MCF 10A (cell line): ENCODE measurements at regions of chr3 and their contacts with region 1.

Region 1: DNA sequence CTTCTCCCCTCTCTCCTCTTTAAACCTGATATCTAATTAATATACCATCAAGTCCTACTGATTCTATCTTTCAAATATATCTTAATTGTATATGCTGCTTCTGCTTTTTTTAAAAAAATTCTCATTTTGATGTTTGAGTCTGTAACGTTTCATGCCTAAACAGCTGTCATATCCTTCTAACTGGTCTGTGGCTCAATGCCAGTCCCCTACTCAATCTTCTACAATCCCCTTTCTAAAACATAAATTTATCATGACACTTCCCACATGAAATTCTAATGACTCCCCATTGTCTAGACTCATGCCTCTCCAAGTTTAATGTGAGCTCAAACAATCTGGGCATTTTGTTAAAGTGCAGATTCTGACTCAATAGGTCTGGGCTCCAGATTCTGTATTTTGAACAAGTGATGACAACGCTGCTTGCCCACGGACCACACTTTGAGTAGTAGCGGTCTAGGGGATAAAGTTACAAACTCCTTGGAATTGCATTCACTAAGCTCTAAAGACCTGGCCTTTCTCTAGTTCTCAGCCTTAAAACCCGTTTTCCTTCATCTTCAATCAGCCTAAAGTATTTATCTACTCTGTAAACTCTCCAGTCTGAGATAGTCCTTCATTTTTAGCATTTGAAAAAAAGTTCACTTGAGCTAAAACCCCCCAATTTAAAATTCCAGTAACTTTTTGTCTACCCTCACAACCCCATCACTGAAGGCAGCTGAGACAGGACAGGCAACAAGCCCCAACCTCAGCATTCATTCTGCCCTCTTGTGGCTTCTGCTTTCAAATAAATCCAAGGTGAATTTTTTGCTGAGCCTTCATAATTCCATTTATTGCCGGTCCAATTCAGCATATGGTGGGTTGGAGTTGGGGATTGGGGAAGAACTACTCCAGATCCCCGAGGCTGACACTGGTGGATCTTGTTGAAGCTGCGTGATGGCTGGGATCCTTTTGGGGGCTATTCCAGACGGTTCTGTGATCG is 88.1 kb upstream of the THRB start:
- DNase-seq: peak; percentile 35
- H3K4me3 Mint-ChIP-seq: no peak overlapping the region
- H3K27ac Mint-ChIP-seq: no peak overlapping the region
- H3K4me1 Mint-ChIP-seq: no peaks in the 10 kb centered on the region
- H3K27me3 Mint-ChIP-seq: no peaks in the 10 kb centered on the region
- CTCF ChIP-seq: peak; percentile 21

Region 2: DNA sequence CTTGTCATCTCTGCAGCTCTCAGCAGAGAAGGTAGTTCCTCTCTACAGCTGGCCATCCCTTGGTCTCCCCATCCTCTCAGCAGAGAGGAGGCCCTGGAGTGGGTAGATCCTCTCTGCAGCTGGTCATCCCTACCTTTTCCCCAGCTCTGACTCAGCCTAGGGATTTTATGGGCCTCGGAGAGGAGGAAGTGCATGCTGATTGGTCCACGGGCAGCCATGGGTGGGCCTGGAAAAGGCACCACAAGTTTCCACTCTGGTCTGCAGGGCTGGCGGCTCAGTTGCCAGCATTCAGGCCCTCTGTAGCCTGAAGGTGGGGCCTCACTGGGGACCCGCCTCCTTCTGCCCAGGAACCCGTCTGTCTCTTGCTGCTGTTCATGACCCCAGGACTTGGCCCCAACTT is 600.8 kb before region 1 on chr3:
- CTCF ChIA-PET with region 1: no interaction called
- POLR2A ChIA-PET with region 1: no interaction called
- intact Hi-C with region 1: no loop called
- DNase-seq: no peak
- H3K4me3 Mint-ChIP-seq: no peak overlapping the region
- H3K27ac Mint-ChIP-seq: no peak overlapping the region
- H3K4me1 Mint-ChIP-seq: no peaks in the 10 kb centered on the region
- H3K27me3 Mint-ChIP-seq: no peaks in the 10 kb centered on the region
- CTCF ChIP-seq: no peak

Region 3: DNA sequence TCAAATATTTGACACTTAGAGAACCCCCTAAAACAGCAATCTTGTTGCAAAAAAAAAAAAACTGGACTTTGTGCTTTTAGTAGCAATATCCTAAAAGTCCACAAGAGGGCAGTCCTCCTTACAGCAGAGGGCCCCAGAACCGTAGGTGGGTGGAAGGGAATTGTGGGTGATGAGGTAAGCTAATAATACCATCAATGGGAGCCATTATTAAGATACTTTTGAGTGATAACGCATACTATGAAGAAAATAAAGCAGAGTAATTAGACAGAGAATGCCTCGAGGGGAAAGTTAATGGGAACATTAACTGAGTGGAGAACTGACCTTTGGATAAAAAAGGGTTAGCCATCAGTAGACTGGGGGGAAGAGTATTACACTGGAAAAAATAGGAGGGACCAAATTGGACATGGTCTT is 318.0 kb before region 1 on chr3:
- CTCF ChIA-PET with region 1: interaction called, 10 read pairs
- POLR2A ChIA-PET with region 1: no interaction called
- intact Hi-C with region 1: loop called (anchors 1 kb)
- DNase-seq: peak; percentile 53
- H3K4me3 Mint-ChIP-seq: no peak overlapping the region
- H3K27ac Mint-ChIP-seq: no peak overlapping the region
- H3K4me1 Mint-ChIP-seq: peaks cover 5% of the 10 kb centered on the region
- H3K27me3 Mint-ChIP-seq: no peaks in the 10 kb centered on the region
- CTCF ChIP-seq: peak; percentile 71

Region 4: GRCh38 chr3:24555721-24556120 is 27.0 kb before region 1 on chr3:
- CTCF ChIA-PET with region 1: no interaction called
- POLR2A ChIA-PET with region 1: no interaction called
- intact Hi-C with region 1: no loop called
- DNase-seq: no peak
- H3K4me3 Mint-ChIP-seq: no peak overlapping the region
- H3K27ac Mint-ChIP-seq: no peak overlapping the region
- H3K4me1 Mint-ChIP-seq: no peaks in the 10 kb centered on the region
- H3K27me3 Mint-ChIP-seq: no peaks in the 10 kb centered on the region
- CTCF ChIP-seq: no peak